ENCODE measurements at regions of chr2 and their contacts with region 1.

Region 1: GRCh38 chr2:30026087-30027055 is 105.0 kb upstream of the ALK start:
- DNase-seq: peak in 1 of 2 donors; percentile 14
- ATAC-seq: peak in 1 of 2 donors; percentile 41
- H3K4me3 ChIP-seq: no peak overlapping the region
- H3K27ac ChIP-seq: no peak overlapping the region
- H3K4me1 ChIP-seq: no peaks in the 10 kb centered on the region
- H3K27me3 ChIP-seq: peaks cover 0 to 16% (median 0%) of the 10 kb centered on the region in 3 donors
- CTCF ChIP-seq: peak in 4 of 5 experiments; percentile 36 to 49 (median 42)
- POLR2A ChIP-seq: no peak

Region 2: GRCh38 chr2:29923110-29923721 is 103.2 kb before region 1 on chr2:
- in situ Hi-C with region 1: no loop called
- intact Hi-C with region 1: loop called (anchors 2 kb)
- DNase-seq: peak; percentile 15 to 41
- ATAC-seq: peak in 1 of 2 donors; percentile 38
- H3K4me3 ChIP-seq: no peak overlapping the region
- H3K27ac ChIP-seq: no peak overlapping the region
- H3K4me1 ChIP-seq: peaks cover 10 to 12% of the 10 kb centered on the region in 2 donors
- H3K27me3 ChIP-seq: peaks cover 33 to 56% (median 46%) of the 10 kb centered on the region in 3 donors
- CTCF ChIP-seq: peak; percentile 50 to 84 (median 63)
- POLR2A ChIP-seq: no peak

Region 3: DNA sequence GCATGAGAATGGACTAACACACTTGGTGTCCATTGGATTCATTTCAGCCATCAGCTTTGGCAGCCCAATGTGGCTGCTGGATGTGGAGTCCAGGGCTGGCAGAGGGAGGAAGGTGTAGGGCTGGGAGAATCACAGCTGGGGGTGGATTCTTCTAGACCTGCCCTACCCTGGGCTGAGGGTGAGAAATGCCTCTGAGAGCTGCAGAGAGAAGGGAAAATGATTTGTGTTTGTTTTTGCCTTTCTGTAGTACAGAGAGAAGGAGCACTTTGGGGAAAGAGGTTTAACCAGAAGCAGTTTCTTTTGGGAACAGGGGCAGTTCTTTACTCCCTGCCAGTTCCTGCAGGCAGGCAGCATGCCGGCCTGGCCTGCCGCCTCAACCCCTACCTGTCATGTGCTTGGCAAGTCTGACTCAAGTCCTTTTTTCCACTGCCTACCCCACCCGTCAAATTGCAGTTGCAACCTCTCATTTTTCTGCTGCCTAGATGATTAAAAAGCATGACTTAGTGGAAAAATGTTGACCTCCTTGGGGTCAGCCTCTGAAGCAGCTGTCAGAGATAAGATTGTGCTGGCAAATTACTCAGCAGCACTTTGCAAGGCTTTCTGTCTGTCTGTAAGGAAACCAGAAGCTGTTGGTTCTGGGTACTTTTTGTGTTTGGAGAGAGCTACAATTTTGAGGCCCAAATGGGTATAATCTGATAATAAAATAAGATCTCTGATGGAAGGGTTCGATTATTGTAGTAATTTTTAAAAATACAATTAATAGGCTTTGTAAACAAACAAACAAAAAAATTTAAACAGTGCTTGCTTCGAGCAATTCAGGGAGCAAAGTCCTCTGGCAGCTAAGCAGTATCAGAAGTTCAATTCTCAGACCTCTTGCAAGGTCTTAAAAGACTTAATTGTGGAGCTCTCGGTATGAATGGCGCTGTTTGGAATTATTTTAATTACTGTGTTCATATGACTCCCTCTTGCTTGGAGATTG is 226.6 kb after region 1 on chr2:
- in situ Hi-C with region 1: no loop called
- intact Hi-C with region 1: no loop called
- DNase-seq: peak; percentile 38 to 41
- ATAC-seq: peak; percentile 66 to 85
- H3K4me3 ChIP-seq: no peak overlapping the region
- H3K27ac ChIP-seq: peak overlapping the region in 3 of 4 donors; percentile 43 to 49 (median 49)
- H3K4me1 ChIP-seq: peaks cover 11% of the 10 kb centered on the region in 2 donors
- H3K27me3 ChIP-seq: no peaks in the 10 kb centered on the region
- CTCF ChIP-seq: no peak
- POLR2A ChIP-seq: no peak

Measured in gastrocnemius medialis (tissue), 4 donors.